Right ventricle myocardium inferior (tissue), 1 donor: ENCODE measurements at regions of chr7 and their contacts with region 1.

Region 1: GRCh38 chr7:155796381-155797261 is 15.6 kb downstream of the SHH start:
- DNase-seq: peak; percentile 82
- ATAC-seq: peak; percentile 63

Region 2: DNA sequence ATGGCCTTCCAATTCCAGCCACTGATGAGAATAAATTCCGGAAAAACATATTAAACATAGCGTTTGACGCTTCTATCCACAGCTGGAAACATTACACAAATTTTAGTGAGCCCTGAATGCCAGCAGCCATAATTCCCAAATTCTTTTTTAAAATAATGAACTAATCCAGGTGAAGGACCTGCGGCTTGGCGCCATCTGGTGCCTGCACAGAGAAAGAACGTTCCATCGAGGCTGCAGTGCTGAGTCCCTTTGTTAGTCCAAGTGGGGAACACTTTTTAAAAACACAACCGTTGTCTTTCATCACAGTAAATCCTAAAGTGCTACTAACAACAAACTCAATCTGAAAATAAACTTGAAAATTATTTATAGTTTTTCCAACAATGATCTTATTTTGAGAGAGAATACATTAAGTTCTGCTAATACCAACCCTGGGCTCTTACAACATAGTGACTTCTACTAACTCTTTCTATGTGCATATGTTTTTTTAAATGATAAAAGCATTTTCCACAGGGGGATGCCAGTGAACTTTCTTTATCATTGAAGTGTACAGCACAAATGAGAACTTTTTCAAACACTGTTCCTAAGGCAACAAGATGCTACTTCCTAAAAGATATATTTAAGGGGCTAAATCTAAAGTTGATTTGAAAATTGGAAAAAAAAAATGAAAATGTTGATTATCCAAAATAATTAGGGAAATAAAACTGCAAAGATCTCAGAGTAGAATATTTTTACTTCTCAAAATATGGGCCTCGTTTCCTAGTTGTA is 677.0 kb after region 1 on chr7:
- intact Hi-C with region 1: loop called (anchors 5 kb)
- DNase-seq: no peak
- ATAC-seq: no peak

Region 3: DNA sequence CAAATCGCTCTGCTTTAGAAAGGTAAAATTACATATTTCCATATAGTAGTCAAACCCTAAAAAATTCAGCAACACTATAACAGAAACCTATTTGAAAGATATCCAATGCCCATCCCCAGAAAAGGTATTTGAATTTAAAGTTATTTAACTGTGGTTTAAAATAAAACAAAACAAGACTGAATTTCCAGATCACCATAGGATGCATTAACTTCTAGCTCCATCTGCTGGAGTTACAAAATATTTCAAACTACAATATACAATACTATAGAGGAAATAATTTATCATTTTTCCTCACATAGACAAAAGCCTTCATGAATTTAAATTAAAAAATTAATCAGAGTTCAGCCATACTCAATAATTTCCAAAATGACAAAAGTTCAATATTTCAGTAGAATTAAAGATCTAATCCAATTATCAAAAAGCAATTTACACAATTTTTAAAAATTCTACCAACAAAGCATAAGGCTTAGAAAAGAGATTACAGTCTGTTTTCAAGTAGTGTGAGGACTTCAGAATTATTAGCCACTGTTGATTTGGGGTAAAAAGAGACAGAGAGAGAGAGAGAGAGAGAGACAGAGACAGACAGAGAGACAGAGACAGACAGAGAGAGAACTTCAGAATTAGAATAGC is 1020.4 kb after region 1 on chr7:
- intact Hi-C with region 1: loop called (anchors 5 kb)
- DNase-seq: no peak
- ATAC-seq: no peak